Activated CD4-positive, alpha-beta T cell treated with anti-CD3 and anti-CD28 coated beads for 36 hours (primary cell): ENCODE measurements at regions of chr10 and their contacts with region 1.

Region 1: DNA sequence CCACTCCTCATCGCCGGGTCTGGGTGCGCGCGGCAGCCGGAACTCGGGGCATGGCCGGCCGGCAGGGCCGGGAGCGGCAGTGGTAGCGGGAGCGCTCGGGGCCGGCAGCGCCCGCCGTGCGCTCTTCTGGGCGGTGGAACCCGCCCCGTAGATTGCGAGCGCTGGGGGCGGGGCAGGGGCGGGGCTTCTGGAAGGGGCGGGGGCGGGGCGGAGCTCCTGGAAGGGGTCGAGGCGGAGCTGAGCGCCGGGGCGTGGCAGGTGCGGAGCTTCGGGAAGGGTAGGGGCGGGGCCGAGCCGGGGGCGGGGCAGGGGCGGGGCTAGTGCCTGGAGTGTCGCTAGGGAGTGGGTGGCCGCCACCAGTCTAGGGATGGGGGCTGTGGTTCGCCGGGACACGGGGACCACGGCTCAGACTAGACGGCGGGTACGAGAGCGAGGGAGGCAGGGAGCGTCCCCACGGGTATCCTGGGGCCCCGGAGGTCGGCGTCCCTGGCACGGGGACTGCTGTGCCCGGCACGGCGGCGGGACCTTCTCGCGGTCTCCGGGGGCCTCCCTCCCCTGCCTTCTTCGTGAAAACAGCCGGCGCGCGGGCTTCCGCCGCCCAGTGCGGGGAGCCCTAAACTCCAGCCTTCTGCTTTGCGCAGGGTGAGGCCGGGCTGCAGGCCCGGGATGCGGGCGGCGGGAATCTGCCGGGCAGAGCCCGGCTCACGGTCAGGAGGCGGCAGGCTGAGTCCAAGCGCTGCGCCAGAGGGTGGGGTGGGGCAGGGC is at the start of gene STK32C:
- DNase-seq: peak; percentile 96
- ATAC-seq: peak; percentile 86
- H3K4me3 Mint-ChIP-seq: peak within 1 kb of the TSS; percentile 84
- H3K27ac Mint-ChIP-seq: no peak within 1 kb of the TSS
- H3K4me1 Mint-ChIP-seq: peaks cover 8% of the 10 kb centered on the region
- H3K27me3 Mint-ChIP-seq: peaks cover 2% of the 10 kb centered on the region
- total RNA-seq, gene STK32C: 15.8 to 19.9 TPM

Region 2: DNA sequence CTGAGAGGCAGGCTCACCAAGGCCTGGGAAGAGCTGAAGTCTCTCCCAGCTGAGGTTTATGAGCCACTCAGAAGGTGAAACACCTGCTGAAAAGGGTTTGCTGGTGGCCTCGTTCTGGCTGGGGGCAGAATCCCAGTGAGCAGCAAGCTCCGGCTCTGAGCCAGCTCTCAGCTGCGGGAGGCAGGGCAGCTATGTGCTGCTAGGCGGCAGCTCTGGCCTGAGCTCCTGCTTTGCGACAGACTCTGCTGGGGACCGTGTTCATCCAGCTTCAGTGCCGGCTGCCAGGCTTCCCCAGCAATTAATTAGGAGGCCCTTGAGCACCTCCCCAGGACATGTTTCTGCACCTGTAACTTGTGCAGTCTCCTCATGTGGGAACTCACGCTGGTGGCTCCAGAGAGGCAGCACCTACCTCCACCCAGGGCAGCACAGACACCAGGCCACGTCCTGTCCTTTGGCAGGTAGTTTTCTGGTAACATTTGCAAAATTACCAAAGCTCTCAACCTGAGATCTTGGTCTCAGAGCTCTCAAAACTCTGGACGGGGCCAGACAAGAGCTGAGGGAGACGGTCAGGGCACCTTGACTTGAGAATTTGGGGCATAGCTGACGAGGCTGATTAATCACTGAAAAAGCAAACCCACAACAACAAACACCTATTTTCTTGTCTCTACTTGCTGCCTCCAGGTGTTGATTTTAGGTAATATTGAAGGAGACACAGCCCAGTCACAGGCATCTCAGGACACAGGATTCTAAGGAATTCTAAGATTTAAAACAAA is 1181.5 kb before region 1 on chr10:
- CTCF ChIA-PET with region 1: no interaction called
- POLR2A ChIA-PET with region 1: no interaction called
- intact Hi-C with region 1: no loop called
- DNase-seq: no peak
- ATAC-seq: no peak
- H3K4me3 Mint-ChIP-seq: no peak overlapping the region
- H3K27ac Mint-ChIP-seq: no peak overlapping the region
- H3K4me1 Mint-ChIP-seq: peaks cover 9% of the 10 kb centered on the region
- H3K27me3 Mint-ChIP-seq: no peaks in the 10 kb centered on the region

Region 3: GRCh38 chr10:131900350-131901146 is 407.5 kb before region 1 on chr10 and contains the start of gene PPP2R2D:
- CTCF ChIA-PET with region 1: no interaction called
- POLR2A ChIA-PET with region 1: no interaction called
- intact Hi-C with region 1: loop called in 1 of 2 experiments (anchors 1 kb)
- DNase-seq: peak; percentile 97
- ATAC-seq: peak; percentile 83
- H3K4me3 Mint-ChIP-seq: peak within 1 kb of the TSS; percentile 93
- H3K27ac Mint-ChIP-seq: peak within 1 kb of the TSS; percentile 92
- H3K4me1 Mint-ChIP-seq: peaks cover 53% of the 10 kb centered on the region
- H3K27me3 Mint-ChIP-seq: peaks cover 7% of the 10 kb centered on the region
- total RNA-seq, gene PPP2R2D: 30.0 to 39.3 TPM

Region 4: GRCh38 chr10:132163278-132163765 is 144.7 kb before region 1 on chr10:
- CTCF ChIA-PET with region 1: no interaction called
- POLR2A ChIA-PET with region 1: no interaction called
- intact Hi-C with region 1: loop called in 1 of 2 experiments (anchors 1 kb)
- DNase-seq: peak; percentile 84
- ATAC-seq: peak; percentile 78
- H3K4me3 Mint-ChIP-seq: no peak overlapping the region
- H3K27ac Mint-ChIP-seq: no peak overlapping the region
- H3K4me1 Mint-ChIP-seq: peaks cover 20% of the 10 kb centered on the region
- H3K27me3 Mint-ChIP-seq: no peaks in the 10 kb centered on the region

Region 5: DNA sequence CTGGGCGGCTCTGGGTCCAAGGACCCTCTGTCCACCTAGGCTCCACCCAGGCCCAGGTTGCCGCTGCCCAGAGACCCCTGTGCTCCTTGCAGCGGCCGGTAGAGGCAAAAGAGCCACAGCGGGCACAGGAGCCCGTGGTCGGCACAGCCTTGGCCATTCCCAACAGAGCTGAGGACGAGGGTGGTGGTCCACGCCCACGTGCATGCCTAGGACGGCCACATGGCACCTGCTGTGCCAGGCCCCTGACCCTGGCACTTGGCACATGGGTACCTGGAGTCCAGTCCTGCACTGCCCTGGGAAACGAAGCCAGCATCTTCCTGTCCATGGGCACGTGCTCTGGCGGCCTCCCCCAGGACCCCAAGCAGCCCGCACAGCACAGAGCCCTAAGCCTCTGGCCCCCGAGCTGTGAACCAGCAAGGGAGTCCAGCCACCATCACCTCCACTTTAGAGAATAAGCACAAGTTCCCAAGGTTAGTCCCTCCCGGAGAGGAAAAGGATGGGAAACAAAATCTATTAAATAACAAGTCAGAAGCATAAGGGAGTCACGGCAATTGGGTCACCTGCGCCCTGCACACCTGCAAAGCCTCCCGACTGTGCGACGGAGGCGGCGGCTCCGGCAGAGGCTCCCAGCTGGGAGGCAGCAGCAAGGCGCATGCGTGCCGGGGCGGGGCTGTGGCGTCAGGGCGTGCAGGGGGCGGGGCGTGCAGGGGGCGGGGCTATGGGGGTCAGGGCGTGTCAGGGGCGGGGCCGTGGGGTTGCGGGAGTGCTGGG is 59.4 kb before region 1 on chr10:
- CTCF ChIA-PET with region 1: no interaction called
- POLR2A ChIA-PET with region 1: no interaction called
- intact Hi-C with region 1: loop called in 1 of 2 experiments (anchors 1 kb)
- DNase-seq: peak; percentile 76
- ATAC-seq: peak; percentile 77
- H3K4me3 Mint-ChIP-seq: no peak overlapping the region
- H3K27ac Mint-ChIP-seq: no peak overlapping the region
- H3K4me1 Mint-ChIP-seq: no peaks in the 10 kb centered on the region
- H3K27me3 Mint-ChIP-seq: no peaks in the 10 kb centered on the region

Region 6: DNA sequence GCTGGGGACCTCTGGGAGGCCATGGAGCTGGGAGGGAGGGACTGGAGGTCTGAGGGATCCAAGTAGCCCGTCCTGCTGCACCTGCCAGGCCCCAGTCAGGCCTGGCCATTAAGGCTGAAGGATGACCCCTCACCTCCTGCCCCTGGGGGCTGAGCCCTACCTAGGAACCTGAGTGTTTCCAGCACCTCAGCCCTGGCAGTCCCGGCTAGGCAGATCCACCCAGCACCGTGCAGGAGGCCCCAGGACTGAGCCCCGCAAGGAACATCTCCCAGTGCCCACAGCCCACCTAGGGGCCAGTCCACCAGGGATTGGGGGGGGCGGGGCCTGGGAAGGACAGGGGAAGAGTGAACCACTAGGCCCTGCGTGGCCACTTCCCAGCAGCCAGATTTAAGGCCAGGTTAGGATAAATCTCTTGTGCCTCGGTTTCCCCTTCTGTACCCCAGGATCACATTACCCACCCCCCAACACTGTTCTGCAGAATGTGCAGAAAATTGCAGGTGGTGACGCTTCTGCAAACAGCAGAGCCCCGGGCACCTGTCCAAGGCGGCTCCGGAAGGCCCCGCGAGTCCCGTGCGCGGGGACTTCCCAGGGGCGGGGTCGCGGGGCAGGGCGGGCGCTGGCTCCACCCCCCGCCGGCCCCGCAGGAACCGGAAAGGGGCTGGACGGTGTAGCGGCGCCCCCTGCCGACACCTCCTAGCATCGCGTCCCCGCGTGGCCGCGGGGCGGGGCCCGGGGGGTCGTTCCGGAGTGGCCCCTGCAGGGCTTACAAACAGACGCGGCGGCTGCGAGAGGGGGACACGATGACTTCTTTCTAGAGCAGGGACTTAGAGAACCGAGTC is 144.8 kb after region 1 on chr10:
- CTCF ChIA-PET with region 1: no interaction called
- POLR2A ChIA-PET with region 1: no interaction called
- intact Hi-C with region 1: loop called in 1 of 2 experiments (anchors 1 kb)
- DNase-seq: peak; percentile 94
- ATAC-seq: peak; percentile 88
- H3K4me3 Mint-ChIP-seq: no peak overlapping the region
- H3K27ac Mint-ChIP-seq: peak overlapping the region; percentile 8
- H3K4me1 Mint-ChIP-seq: peaks cover 18% of the 10 kb centered on the region
- H3K27me3 Mint-ChIP-seq: no peaks in the 10 kb centered on the region

Region 7: DNA sequence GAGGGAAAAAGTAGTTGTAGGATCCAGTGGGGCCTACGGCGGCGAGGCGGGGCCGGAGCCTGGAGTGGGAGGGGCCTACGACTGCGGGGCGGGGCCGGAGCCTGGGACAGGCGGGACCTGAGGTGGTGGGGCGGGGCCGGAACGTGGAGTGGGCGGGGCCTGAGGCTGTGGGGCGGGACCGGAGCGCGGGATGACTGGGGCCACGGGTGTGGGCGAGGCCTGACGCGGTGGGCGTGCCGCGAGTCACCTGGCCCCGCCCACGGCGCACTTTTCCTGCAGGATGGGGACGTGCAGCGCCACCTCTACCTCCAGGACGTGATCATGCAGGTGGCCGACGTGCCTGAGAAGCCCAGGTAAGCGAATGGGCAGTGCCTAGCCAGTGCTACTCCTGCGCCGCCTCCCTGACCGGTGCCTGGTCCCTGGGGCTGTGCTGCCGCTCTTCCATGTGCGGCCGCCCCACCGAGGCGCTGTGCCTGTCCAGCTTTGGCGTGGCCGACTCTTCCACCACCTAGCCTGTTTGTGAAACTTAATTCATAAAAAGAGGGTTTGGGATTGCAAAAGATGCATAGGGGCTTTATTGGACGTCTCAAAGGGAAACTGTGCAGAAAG is 1001.2 kb after region 1 on chr10:
- CTCF ChIA-PET with region 1: no interaction called
- POLR2A ChIA-PET with region 1: no interaction called
- intact Hi-C with region 1: loop called in 1 of 2 experiments (anchors 2 kb)
- DNase-seq: peak; percentile 97
- ATAC-seq: peak; percentile 84
- H3K4me3 Mint-ChIP-seq: peak overlapping the region; percentile 100
- H3K27ac Mint-ChIP-seq: peak overlapping the region; percentile 69
- H3K4me1 Mint-ChIP-seq: peaks cover 30% of the 10 kb centered on the region
- H3K27me3 Mint-ChIP-seq: no peaks in the 10 kb centered on the region